ENCODE measurements at regions of chr2 and their contacts with region 1.

Region 1: GRCh38 chr2:27095745-27096651 is 9.4 kb downstream of the KHK start:
- DNase-seq: peak; percentile 67 to 81 (median 77)
- H3K4me3 ChIP-seq: peak overlapping the region; percentile 25 to 50 (median 42)
- H3K27ac ChIP-seq: peak overlapping the region; percentile 33 to 58
- H3K4me1 ChIP-seq: peaks cover 0 to 28% (median 12%) of the 10 kb centered on the region in 3 donors
- H3K27me3 ChIP-seq: no peaks in the 10 kb centered on the region
- CTCF ChIP-seq: no peak

Region 2: GRCh38 chr2:27303093-27304025 is 207.4 kb after region 1 on chr2:
- intact Hi-C with region 1: loop called (anchors 10 kb)
- DNase-seq: peak in 3 of 5 donors; percentile 49 to 82 (median 67)
- H3K4me3 ChIP-seq: peak overlapping the region in 2 of 3 donors; percentile 3 to 29
- H3K27ac ChIP-seq: no peak overlapping the region
- H3K4me1 ChIP-seq: peaks cover 0 to 3% (median 0%) of the 10 kb centered on the region in 3 donors
- H3K27me3 ChIP-seq: peaks cover 17% of the 10 kb centered on the region
- CTCF ChIP-seq: peak; percentile 93

Measured in kidney (tissue), 22 donors.